PC-3 (cell line): ENCODE measurements at regions of chr11 and their contacts with region 1.

Region 1: GRCh38 chr11:61967116-61967923 is at the start of gene FTH1:
- DNase-seq: peak; percentile 96
- ATAC-seq: peak; percentile 36
- H3K4me3 ChIP-seq: peak within 1 kb of the TSS; percentile 95
- H3K27ac ChIP-seq: peak within 1 kb of the TSS; percentile 88
- H3K4me1 ChIP-seq: peaks cover 53% of the 10 kb centered on the region
- H3K27me3 ChIP-seq: no peaks in the 10 kb centered on the region
- CTCF ChIP-seq: no peak
- total RNA-seq, gene FTH1: 1,927 and 1,937 TPM in 2 replicates

Region 2: GRCh38 chr11:61899146-61899841 is 68.0 kb before region 1 on chr11:
- CTCF ChIA-PET with region 1: interaction called, 3 read pairs
- POLR2A ChIA-PET with region 1: interaction called, 7 read pairs
- intact Hi-C with region 1: loop called (anchors 5 kb)
- DNase-seq: peak; percentile 94
- ATAC-seq: peak; percentile 85
- H3K4me3 ChIP-seq: no peak overlapping the region
- H3K27ac ChIP-seq: no peak overlapping the region
- H3K4me1 ChIP-seq: no peaks in the 10 kb centered on the region
- H3K27me3 ChIP-seq: no peaks in the 10 kb centered on the region
- CTCF ChIP-seq: peak; percentile 99

Region 3: DNA sequence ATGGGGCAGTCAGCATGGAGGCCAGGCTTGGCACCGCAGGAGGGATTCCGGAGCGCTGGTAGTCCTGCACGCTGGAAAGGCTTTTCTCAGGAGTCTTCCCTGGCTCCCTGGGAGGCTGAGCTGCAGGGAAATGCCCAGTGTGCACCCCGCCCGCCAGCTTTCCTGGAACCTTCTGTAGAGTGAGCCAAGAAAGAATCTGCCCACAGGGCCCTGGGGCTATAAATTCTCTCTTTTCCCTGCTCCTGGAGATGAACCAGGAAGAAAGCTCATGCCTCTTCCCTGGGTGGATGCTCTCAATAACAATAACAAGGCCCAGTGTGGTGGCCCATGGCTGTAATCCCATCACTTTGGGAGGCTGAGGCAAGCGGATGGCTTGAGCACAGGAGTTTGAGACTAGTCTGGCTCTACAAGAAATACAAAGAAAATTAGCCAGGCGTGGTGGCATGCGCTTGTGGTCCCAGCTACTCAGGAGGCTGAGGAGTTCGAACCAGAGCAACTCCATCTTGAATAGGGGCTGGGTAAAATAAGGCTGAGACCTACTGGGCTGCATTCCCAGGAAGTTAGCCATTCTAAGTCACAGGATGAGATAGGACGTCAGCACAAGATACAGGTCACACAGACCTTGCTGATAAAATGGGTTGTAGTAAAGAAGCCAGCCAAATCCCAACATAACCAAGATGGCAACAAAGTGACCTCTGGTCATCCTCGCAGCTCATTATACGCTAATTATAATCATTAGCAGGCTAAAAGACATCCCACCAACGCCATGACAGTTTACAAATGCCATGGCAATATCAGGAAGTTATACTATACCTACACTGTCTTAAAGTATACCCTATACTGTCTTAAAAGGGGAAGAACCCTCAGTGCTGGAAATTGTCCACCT is 46.5 kb after region 1 on chr11:
- CTCF ChIA-PET with region 1: no interaction called
- POLR2A ChIA-PET with region 1: interaction called, 11 read pairs
- intact Hi-C with region 1: loop called (anchors 2 kb)
- DNase-seq: peak; percentile 85
- ATAC-seq: peak; percentile 53
- H3K4me3 ChIP-seq: peak overlapping the region; percentile 31
- H3K27ac ChIP-seq: peak overlapping the region; percentile 94
- H3K4me1 ChIP-seq: peaks cover 28% of the 10 kb centered on the region
- H3K27me3 ChIP-seq: no peaks in the 10 kb centered on the region
- CTCF ChIP-seq: no peak

Region 4: GRCh38 chr11:62033191-62034044 is 66.1 kb after region 1 on chr11:
- CTCF ChIA-PET with region 1: no interaction called
- POLR2A ChIA-PET with region 1: interaction called, 11 read pairs
- intact Hi-C with region 1: loop called (anchors 1 kb)
- DNase-seq: peak; percentile 93
- ATAC-seq: peak; percentile 94
- H3K4me3 ChIP-seq: no peak overlapping the region
- H3K27ac ChIP-seq: peak overlapping the region; percentile 78
- H3K4me1 ChIP-seq: peaks cover 17% of the 10 kb centered on the region
- H3K27me3 ChIP-seq: no peaks in the 10 kb centered on the region
- CTCF ChIP-seq: no peak

Region 5: GRCh38 chr11:62054484-62055121 is 87.3 kb after region 1 on chr11:
- CTCF ChIA-PET with region 1: interaction called, 3 read pairs
- POLR2A ChIA-PET with region 1: interaction called, 7 read pairs
- intact Hi-C with region 1: loop called (anchors 1 kb)
- DNase-seq: peak; percentile 95
- ATAC-seq: peak; percentile 87
- H3K4me3 ChIP-seq: no peak overlapping the region
- H3K27ac ChIP-seq: peak overlapping the region; percentile 64
- H3K4me1 ChIP-seq: peaks cover 36% of the 10 kb centered on the region
- H3K27me3 ChIP-seq: no peaks in the 10 kb centered on the region
- CTCF ChIP-seq: peak; percentile 93